ENCODE measurements at regions of chr16 and their contacts with region 1.

Region 1: GRCh38 chr16:48244080-48244862 is at the start of gene LONP2:
- DNase-seq: peak; percentile 92
- CTCF ChIP-seq: no peak

Region 2: DNA sequence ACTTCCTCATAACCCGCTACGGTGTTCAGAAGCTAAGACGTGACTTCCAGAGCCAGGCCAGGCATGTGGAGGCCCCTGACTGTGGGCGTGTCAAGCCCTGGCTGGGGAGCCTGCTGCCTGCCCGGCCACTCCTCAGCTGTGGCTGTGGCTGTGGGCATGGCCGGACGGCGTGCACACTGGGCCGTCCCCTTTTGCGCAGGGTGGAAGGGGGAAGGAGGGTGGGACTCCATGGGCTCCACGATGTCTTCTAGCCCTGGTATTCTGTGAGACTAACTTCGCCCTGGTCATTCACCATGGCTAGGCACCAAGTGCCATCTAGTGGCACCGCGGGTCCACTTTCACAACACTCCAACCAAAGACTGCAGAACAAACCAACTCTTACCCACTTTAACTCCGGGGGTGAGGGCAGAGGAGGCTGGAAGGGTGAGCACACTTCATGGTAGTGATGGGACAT is 297.8 kb after region 1 on chr16:
- in situ Hi-C with region 1: loop called (anchors 25 kb)
- DNase-seq: peak; percentile 54
- CTCF ChIP-seq: no peak